SK-N-SH (cell line): ENCODE measurements at regions of chr22 and their contacts with region 1.

Region 1: GRCh38 chr22:20741634-20742581 is 32.0 kb upstream of the SERPIND1 start:
- DNase-seq: peak; percentile 66
- H3K4me3 ChIP-seq: no peak overlapping the region; a peak in 1 of 4 replicates
- H3K27ac ChIP-seq: no peak overlapping the region; a peak in 1 of 4 replicates
- H3K4me1 ChIP-seq: no peaks in the 10 kb centered on the region; a peak in 2 of 4 replicates
- H3K27me3 ChIP-seq: no peaks in the 10 kb centered on the region
- CTCF ChIP-seq: peak; percentile 56
- EP300 ChIP-seq: no peak
- RAD21 ChIP-seq: peak; percentile 69

Region 2: DNA sequence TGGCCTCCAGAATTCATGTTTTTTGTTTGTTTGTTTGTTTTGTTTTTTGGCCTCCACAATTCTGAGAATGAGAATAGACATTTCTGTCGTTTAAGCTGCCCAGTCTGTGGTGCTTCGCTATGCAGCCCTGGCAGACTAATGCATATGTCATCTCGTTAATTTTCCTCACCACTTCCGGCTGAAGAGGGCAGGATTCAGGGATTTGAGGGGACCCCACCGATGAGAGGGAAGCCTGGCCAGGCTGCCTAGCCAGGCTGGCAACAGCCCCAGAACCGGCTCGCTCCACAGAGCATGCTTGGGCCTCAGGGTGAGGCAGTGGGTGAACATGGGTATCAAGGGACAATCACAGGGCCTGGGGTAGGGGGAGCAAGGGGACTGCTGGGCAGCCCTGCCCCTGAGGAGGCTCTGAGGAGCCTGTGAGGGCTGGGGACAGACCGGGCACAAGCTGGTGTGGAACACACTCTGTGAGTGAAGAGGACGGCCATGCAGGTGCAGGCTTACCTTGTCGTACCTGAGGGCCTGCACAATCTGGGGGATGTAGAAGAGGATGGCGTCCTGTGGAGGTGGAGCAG is 15.8 kb before region 1 on chr22:
- CTCF ChIA-PET with region 1: interaction called, 11 read pairs
- POLR2A ChIA-PET with region 1: no interaction called
- DNase-seq: no peak
- H3K4me3 ChIP-seq: no peak overlapping the region
- H3K27ac ChIP-seq: no peak overlapping the region
- H3K4me1 ChIP-seq: peaks cover 0 to 12% of the 10 kb centered on the region in 2 experiments; a peak in 1 of 4 replicates
- H3K27me3 ChIP-seq: no peaks in the 10 kb centered on the region
- CTCF ChIP-seq: no peak
- EP300 ChIP-seq: no peak
- RAD21 ChIP-seq: no peak

Region 3: GRCh38 chr22:20761536-20761935 is 19.6 kb after region 1 on chr22:
- CTCF ChIA-PET with region 1: interaction called, 15 read pairs
- POLR2A ChIA-PET with region 1: no interaction called
- DNase-seq: no peak
- H3K4me3 ChIP-seq: no peak overlapping the region
- H3K27ac ChIP-seq: no peak overlapping the region
- H3K4me1 ChIP-seq: no peaks in the 10 kb centered on the region
- H3K27me3 ChIP-seq: no peaks in the 10 kb centered on the region
- CTCF ChIP-seq: no peak
- EP300 ChIP-seq: no peak
- RAD21 ChIP-seq: no peak